ENCODE measurements at regions of chr1 and their contacts with region 1.

Region 1: DNA sequence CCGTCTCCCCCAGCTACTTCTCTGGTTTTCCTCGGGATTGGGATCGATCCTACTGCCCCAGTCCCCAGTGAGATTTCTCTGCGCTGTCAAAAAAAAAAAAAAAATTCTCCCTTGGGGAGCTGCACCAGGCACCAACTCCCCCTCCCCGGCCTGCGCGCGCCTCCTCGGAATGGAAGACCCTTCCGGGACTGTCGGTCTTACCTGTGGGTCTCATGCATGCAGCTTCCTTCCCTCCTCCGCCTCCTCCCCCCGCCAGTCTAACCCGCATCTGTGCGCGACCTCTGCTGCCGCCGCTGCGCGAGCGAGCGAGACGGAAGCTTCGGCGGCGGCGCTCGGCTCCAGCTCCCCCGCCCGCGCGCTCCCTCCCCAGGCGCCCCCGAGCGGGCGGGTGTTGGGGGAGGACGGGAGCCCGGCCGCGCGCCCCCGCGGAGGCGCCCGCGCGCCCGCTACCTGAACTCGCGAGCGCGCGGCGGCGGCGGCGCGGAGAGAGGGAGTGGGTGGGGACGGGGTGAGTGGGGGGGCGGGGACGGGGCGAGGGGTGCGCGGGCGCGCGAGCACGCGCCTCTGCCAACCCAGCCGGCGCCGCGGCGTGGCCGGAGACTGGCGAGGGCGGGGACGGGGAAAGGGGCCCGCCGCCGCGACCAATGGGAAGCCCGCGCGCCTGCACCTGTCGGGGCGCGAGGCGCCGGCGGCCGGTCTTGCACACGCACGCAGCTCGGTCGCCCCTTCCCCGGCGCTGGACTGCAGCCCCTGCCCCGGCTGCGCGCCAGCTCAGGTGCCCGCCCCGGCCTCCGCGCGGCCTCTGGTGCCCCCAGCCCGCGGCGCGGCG is at the start of gene SUSD4:
- DNase-seq: peak; percentile 71 to 82 (median 78)
- H3K4me3 ChIP-seq: peak within 1 kb of the TSS; percentile 33 to 59
- H3K4me3 Mint-ChIP-seq: peak within 1 kb of the TSS; percentile 89 to 94 (median 92)
- H3K27ac ChIP-seq: no peak within 1 kb of the TSS
- H3K27ac Mint-ChIP-seq: peak within 1 kb of the TSS in 6 of 7 donors; percentile 57 to 87 (median 82)
- H3K4me1 ChIP-seq: peaks cover 19% of the 10 kb centered on the region
- H3K4me1 Mint-ChIP-seq: peaks cover 12 to 32% (median 18%) of the 10 kb centered on the region in 4 donors
- H3K27me3 ChIP-seq: no peaks in the 10 kb centered on the region
- H3K27me3 Mint-ChIP-seq: peaks cover 0 to 4% of the 10 kb centered on the region in 2 donors
- total RNA-seq, gene SUSD4: 2.9 to 3.0 TPM

Region 2: GRCh38 chr1:223142795-223143536 is 221.1 kb before region 1 on chr1 and contains the start of gene TLR5:
- CTCF ChIA-PET with region 1: interaction called, 3 read pairs
- POLR2A ChIA-PET with region 1: interaction called, 11 read pairs
- intact Hi-C with region 1: no loop called
- DNase-seq: peak; percentile 82 to 87 (median 84)
- H3K4me3 ChIP-seq: peak within 1 kb of the TSS; percentile 6 to 65
- H3K4me3 Mint-ChIP-seq: peak within 1 kb of the TSS; percentile 72 to 87 (median 84)
- H3K27ac ChIP-seq: peak within 1 kb of the TSS; percentile 44
- H3K27ac Mint-ChIP-seq: peak within 1 kb of the TSS; percentile 68 to 92 (median 87)
- H3K4me1 ChIP-seq: peaks cover 19% of the 10 kb centered on the region
- H3K4me1 Mint-ChIP-seq: peaks cover 13 to 31% (median 21%) of the 10 kb centered on the region in 4 donors
- H3K27me3 ChIP-seq: no peaks in the 10 kb centered on the region
- H3K27me3 Mint-ChIP-seq: no peaks in the 10 kb centered on the region
- total RNA-seq, gene TLR5: 5.9 to 7.1 TPM

Region 3: GRCh38 chr1:223189903-223190724 is 174.0 kb before region 1 on chr1:
- CTCF ChIA-PET with region 1: no interaction called
- POLR2A ChIA-PET with region 1: interaction called, 3 read pairs
- intact Hi-C with region 1: loop called (anchors 5 kb)
- DNase-seq: peak; percentile 33 to 68 (median 41)
- H3K4me3 ChIP-seq: no peak overlapping the region
- H3K4me3 Mint-ChIP-seq: peak overlapping the region; percentile 23 to 78 (median 56)
- H3K27ac ChIP-seq: no peak overlapping the region
- H3K27ac Mint-ChIP-seq: peak overlapping the region; percentile 6 to 93 (median 60)
- H3K4me1 ChIP-seq: peaks cover 36% of the 10 kb centered on the region
- H3K4me1 Mint-ChIP-seq: peaks cover 25 to 53% (median 37%) of the 10 kb centered on the region in 4 donors
- H3K27me3 ChIP-seq: no peaks in the 10 kb centered on the region
- H3K27me3 Mint-ChIP-seq: no peaks in the 10 kb centered on the region

Region 4: GRCh38 chr1:223244366-223245103 is 119.5 kb before region 1 on chr1:
- CTCF ChIA-PET with region 1: no interaction called
- POLR2A ChIA-PET with region 1: no interaction called
- intact Hi-C with region 1: loop called (anchors 5 kb)
- DNase-seq: peak in 2 of 5 donors; percentile 16 to 43
- H3K4me3 ChIP-seq: no peak overlapping the region
- H3K4me3 Mint-ChIP-seq: no peak overlapping the region
- H3K27ac ChIP-seq: no peak overlapping the region
- H3K27ac Mint-ChIP-seq: peak overlapping the region in 3 of 7 donors; percentile 5 to 81 (median 26)
- H3K4me1 ChIP-seq: peaks cover 39% of the 10 kb centered on the region
- H3K4me1 Mint-ChIP-seq: peaks cover 22 to 45% (median 32%) of the 10 kb centered on the region in 4 donors
- H3K27me3 ChIP-seq: no peaks in the 10 kb centered on the region
- H3K27me3 Mint-ChIP-seq: peaks cover 4 to 5% of the 10 kb centered on the region in 2 donors

Region 5: GRCh38 chr1:223289621-223290020 is 74.4 kb before region 1 on chr1:
- CTCF ChIA-PET with region 1: no interaction called
- POLR2A ChIA-PET with region 1: no interaction called
- intact Hi-C with region 1: no loop called
- DNase-seq: no peak
- H3K4me3 ChIP-seq: no peak overlapping the region
- H3K4me3 Mint-ChIP-seq: no peak overlapping the region
- H3K27ac ChIP-seq: no peak overlapping the region
- H3K27ac Mint-ChIP-seq: no peak overlapping the region
- H3K4me1 ChIP-seq: no peaks in the 10 kb centered on the region
- H3K4me1 Mint-ChIP-seq: no peaks in the 10 kb centered on the region
- H3K27me3 ChIP-seq: no peaks in the 10 kb centered on the region
- H3K27me3 Mint-ChIP-seq: peaks cover 0 to 3% of the 10 kb centered on the region in 2 donors